Sigmoid colon (tissue), 7 donors: ENCODE measurements at regions of chr7 and their contacts with region 1.

Region 1: DNA sequence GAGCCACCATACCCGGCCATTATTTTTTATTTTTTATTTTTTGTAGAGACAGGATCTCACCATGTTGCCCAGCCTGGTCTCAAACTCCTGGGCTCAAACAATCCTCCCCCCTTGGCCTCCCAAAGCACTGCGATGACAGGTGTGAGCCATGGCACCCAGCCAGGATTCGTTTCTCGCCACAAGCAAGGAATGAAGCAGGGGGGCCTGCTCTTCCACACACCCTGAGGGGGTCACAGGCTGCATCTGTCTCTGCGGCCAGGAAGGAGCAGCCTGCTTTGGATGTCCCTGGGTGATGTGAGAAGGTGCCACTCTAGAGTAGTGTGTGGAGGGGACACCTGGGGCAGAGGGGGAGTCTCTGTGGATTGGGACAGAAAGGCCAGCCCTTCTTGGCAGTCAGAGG is 61.3 kb upstream of the TNRC18 start:
- DNase-seq: no peak
- H3K4me3 ChIP-seq: no peak overlapping the region
- H3K27ac ChIP-seq: no peak overlapping the region
- H3K4me1 ChIP-seq: peaks cover 0 to 9% (median 3%) of the 10 kb centered on the region in 4 donors
- H3K27me3 ChIP-seq: no peaks in the 10 kb centered on the region
- CTCF ChIP-seq: no peak
- EP300 ChIP-seq: no peak
- POLR2A ChIP-seq: no peak

Region 2: DNA sequence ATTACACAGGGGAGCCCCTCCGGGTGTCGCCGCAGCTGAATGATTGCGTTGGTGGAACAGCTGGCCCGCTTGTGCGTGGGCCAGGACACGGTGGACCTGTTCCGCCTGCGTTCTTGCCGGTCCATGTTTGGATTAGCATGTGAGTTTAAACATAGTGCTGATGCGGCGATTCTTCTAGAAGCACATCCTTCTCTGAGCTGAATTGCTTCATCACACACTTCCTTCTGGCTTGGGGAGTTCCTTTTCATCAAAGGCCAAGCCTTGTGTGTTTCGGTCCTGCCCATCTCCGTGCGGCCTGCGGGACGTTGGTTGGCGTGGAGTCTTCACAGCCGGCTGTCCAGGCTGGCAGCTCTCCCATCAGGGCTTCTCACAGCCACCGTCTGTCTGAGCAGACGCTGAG is 247.6 kb before region 1 on chr7:
- intact Hi-C with region 1: loop called (anchors 2 kb)
- DNase-seq: peak; percentile 87
- H3K4me3 ChIP-seq: peak overlapping the region in 2 of 4 donors; percentile 5 to 17
- H3K27ac ChIP-seq: peak overlapping the region in 2 of 4 donors; percentile 36 to 59
- H3K4me1 ChIP-seq: peaks cover 0 to 13% (median 10%) of the 10 kb centered on the region in 4 donors
- H3K27me3 ChIP-seq: no peaks in the 10 kb centered on the region
- CTCF ChIP-seq: no peak
- EP300 ChIP-seq: peak in 3 of 4 donors; percentile 18 to 72 (median 63)
- POLR2A ChIP-seq: no peak